Calu3 (cell line): ENCODE measurements at regions of chr5 and their contacts with region 1.

Region 1: GRCh38 chr5:96344678-96345577 is 88.1 kb downstream of the PCSK1 start:
- DNase-seq: peak; percentile 58
- H3K4me3 Mint-ChIP-seq: no peak overlapping the region
- H3K27ac Mint-ChIP-seq: no peak overlapping the region
- H3K4me1 Mint-ChIP-seq: no peaks in the 10 kb centered on the region
- H3K27me3 Mint-ChIP-seq: no peaks in the 10 kb centered on the region
- CTCF ChIP-seq: peak; percentile 58

Region 2: DNA sequence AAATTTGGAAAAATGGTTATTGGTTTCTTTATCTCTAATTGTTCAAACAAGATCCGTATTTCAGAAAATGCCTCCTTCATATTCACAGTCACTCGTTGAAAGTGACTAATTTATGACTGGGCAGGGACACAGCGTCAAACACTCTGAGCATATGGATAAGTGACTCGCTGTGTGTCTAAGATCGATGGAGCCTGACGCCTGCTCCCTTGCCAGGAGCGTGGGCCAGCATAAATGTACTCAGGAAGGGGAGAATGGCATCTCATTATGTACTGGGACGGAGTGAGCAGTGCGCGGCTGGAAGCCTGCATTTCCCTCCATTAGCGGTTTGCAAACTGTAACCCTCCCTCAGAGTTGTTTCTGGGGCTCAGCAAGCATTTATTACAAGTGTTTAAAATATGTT is 237.4 kb after region 1 on chr5:
- CTCF ChIA-PET with region 1: interaction called, 3 read pairs
- intact Hi-C with region 1: loop called (anchors 5 kb)
- DNase-seq: peak; percentile 41
- H3K4me3 Mint-ChIP-seq: no peak overlapping the region
- H3K27ac Mint-ChIP-seq: no peak overlapping the region
- H3K4me1 Mint-ChIP-seq: peaks cover 9% of the 10 kb centered on the region
- H3K27me3 Mint-ChIP-seq: peaks cover 22% of the 10 kb centered on the region
- CTCF ChIP-seq: no peak

Region 3: GRCh38 chr5:96601811-96602244 is 256.9 kb after region 1 on chr5:
- CTCF ChIA-PET with region 1: interaction called, 11 read pairs
- intact Hi-C with region 1: loop called (anchors 1 kb)
- DNase-seq: peak; percentile 79
- H3K4me3 Mint-ChIP-seq: no peak overlapping the region
- H3K27ac Mint-ChIP-seq: no peak overlapping the region
- H3K4me1 Mint-ChIP-seq: no peaks in the 10 kb centered on the region
- H3K27me3 Mint-ChIP-seq: peaks cover 14% of the 10 kb centered on the region
- CTCF ChIP-seq: peak; percentile 73

Region 4: DNA sequence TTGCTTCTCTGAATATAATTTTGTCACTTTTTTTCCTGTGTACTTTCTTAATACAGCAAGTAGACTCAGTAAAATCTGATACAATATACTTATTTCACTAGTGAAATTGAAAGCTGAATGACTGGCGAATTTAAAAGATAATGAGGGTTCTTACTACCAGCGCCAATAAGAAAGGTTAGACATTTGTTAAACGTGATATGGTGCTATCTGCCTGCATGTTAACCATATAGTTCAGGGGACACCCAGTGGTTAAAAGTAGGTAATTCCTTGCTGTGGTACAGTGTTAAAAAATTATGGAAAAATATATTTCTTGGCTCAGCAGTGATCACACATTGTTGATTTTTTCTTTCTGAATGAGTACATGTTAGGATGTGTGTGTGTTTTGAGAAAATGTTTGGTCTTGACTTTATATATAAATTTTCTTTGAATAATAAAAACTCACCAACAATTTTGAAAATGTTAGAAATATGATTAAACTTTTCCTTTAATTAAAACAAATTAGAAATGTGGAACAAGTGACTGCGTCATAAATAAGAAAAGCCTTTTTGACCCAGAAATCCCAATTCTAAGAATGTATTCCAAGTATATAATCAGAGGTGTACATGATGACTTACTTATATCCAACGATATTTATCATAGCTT is 343.0 kb after region 1 on chr5:
- CTCF ChIA-PET with region 1: no interaction called
- intact Hi-C with region 1: loop called (anchors 1 kb)
- DNase-seq: no peak
- H3K4me3 Mint-ChIP-seq: no peak overlapping the region
- H3K27ac Mint-ChIP-seq: no peak overlapping the region
- H3K4me1 Mint-ChIP-seq: peaks cover 30% of the 10 kb centered on the region
- H3K27me3 Mint-ChIP-seq: no peaks in the 10 kb centered on the region
- CTCF ChIP-seq: peak; percentile 65

Region 5: GRCh38 chr5:96743065-96743768 is 398.3 kb after region 1 on chr5:
- CTCF ChIA-PET with region 1: no interaction called
- intact Hi-C with region 1: loop called (anchors 10 kb)
- DNase-seq: no peak
- H3K4me3 Mint-ChIP-seq: no peak overlapping the region
- H3K27ac Mint-ChIP-seq: peak overlapping the region; percentile 71
- H3K4me1 Mint-ChIP-seq: peaks cover 7% of the 10 kb centered on the region
- H3K27me3 Mint-ChIP-seq: no peaks in the 10 kb centered on the region
- CTCF ChIP-seq: no peak